OCI-LY7 (cell line): ENCODE measurements at regions of chr2 and their contacts with region 1.

Region 1: GRCh38 chr2:223957092-223957851 is at the start of gene MRPL44:
- DNase-seq: peak; percentile 96
- H3K4me3 ChIP-seq: peak within 1 kb of the TSS; percentile 91
- H3K27ac ChIP-seq: peak within 1 kb of the TSS; percentile 29
- H3K4me1 ChIP-seq: peaks cover 82% of the 10 kb centered on the region
- CTCF ChIP-seq: no peak
- total RNA-seq, gene MRPL44: 25.4 and 36.2 TPM in 2 replicates

Region 2: DNA sequence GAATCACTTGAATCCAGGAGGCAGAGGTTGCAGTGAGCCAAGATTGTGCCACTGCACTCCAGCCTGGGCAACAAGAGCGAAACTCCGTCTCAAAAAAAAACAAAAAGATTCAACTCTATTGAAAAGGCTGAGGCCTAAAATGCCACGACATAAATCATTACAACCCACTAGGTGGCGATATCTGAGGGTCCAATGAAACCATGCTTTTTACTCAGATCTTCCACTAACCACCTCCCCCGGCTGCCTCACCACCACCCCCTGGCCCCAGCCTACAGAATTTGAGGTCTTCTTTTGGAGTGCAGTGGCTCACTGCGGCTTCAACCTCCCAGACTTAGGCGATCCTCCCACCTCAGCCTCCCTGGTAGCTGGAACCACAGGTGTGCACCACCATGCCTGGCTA is 177.4 kb before region 1 on chr2:
- CTCF ChIA-PET with region 1: no interaction called
- POLR2A ChIA-PET with region 1: no interaction called
- intact Hi-C with region 1: loop called (anchors 5 kb)
- DNase-seq: peak; percentile 81
- H3K4me3 ChIP-seq: no peak overlapping the region
- H3K27ac ChIP-seq: no peak overlapping the region
- H3K4me1 ChIP-seq: no peaks in the 10 kb centered on the region
- CTCF ChIP-seq: peak; percentile 70

Region 3: GRCh38 chr2:224046752-224047151 is 89.5 kb after region 1 on chr2:
- CTCF ChIA-PET with region 1: no interaction called
- POLR2A ChIA-PET with region 1: no interaction called
- intact Hi-C with region 1: no loop called
- DNase-seq: no peak
- H3K4me3 ChIP-seq: no peak overlapping the region
- H3K27ac ChIP-seq: no peak overlapping the region
- H3K4me1 ChIP-seq: no peaks in the 10 kb centered on the region
- CTCF ChIP-seq: no peak